Activated CD8-positive, alpha-beta T cell treated with anti-CD3 and anti-CD28 coated beads for 36 hours (primary cell): ENCODE measurements at regions of chr12 and their contacts with region 1.

Region 1: GRCh38 chr12:12916135-12916944 is 25.0 kb downstream of the GPRC5A start:
- DNase-seq: peak; percentile 92
- ATAC-seq: peak; percentile 98
- H3K4me3 Mint-ChIP-seq: no peak overlapping the region
- H3K27ac Mint-ChIP-seq: no peak overlapping the region
- H3K4me1 Mint-ChIP-seq: peaks cover 7% of the 10 kb centered on the region
- H3K27me3 Mint-ChIP-seq: peaks cover 12% of the 10 kb centered on the region
- CTCF ChIP-seq: peak; percentile 89

Region 2: GRCh38 chr12:12786716-12787601 is 129.4 kb before region 1 on chr12:
- CTCF ChIA-PET with region 1: interaction called, 26 read pairs
- POLR2A ChIA-PET with region 1: no interaction called
- intact Hi-C with region 1: no loop called
- DNase-seq: peak; percentile 67
- ATAC-seq: peak; percentile 88
- H3K4me3 Mint-ChIP-seq: peak overlapping the region; percentile 86
- H3K27ac Mint-ChIP-seq: peak overlapping the region; percentile 89
- H3K4me1 Mint-ChIP-seq: peaks cover 36% of the 10 kb centered on the region
- H3K27me3 Mint-ChIP-seq: no peaks in the 10 kb centered on the region
- CTCF ChIP-seq: no peak

Region 3: GRCh38 chr12:12954356-12954755 is 38.0 kb after region 1 on chr12:
- CTCF ChIA-PET with region 1: no interaction called
- POLR2A ChIA-PET with region 1: no interaction called
- intact Hi-C with region 1: no loop called
- DNase-seq: no peak
- ATAC-seq: no peak
- H3K4me3 Mint-ChIP-seq: no peak overlapping the region
- H3K27ac Mint-ChIP-seq: no peak overlapping the region
- H3K4me1 Mint-ChIP-seq: no peaks in the 10 kb centered on the region
- H3K27me3 Mint-ChIP-seq: peaks cover 5% of the 10 kb centered on the region
- CTCF ChIP-seq: no peak

Region 4: GRCh38 chr12:12983420-12984035 is 67.2 kb after region 1 on chr12:
- CTCF ChIA-PET with region 1: interaction called, 40 read pairs
- POLR2A ChIA-PET with region 1: no interaction called
- intact Hi-C with region 1: loop called (anchors 2 kb)
- DNase-seq: no peak
- ATAC-seq: no peak
- H3K4me3 Mint-ChIP-seq: no peak overlapping the region
- H3K27ac Mint-ChIP-seq: no peak overlapping the region
- H3K4me1 Mint-ChIP-seq: no peaks in the 10 kb centered on the region
- H3K27me3 Mint-ChIP-seq: no peaks in the 10 kb centered on the region
- CTCF ChIP-seq: peak; percentile 59

Region 5: DNA sequence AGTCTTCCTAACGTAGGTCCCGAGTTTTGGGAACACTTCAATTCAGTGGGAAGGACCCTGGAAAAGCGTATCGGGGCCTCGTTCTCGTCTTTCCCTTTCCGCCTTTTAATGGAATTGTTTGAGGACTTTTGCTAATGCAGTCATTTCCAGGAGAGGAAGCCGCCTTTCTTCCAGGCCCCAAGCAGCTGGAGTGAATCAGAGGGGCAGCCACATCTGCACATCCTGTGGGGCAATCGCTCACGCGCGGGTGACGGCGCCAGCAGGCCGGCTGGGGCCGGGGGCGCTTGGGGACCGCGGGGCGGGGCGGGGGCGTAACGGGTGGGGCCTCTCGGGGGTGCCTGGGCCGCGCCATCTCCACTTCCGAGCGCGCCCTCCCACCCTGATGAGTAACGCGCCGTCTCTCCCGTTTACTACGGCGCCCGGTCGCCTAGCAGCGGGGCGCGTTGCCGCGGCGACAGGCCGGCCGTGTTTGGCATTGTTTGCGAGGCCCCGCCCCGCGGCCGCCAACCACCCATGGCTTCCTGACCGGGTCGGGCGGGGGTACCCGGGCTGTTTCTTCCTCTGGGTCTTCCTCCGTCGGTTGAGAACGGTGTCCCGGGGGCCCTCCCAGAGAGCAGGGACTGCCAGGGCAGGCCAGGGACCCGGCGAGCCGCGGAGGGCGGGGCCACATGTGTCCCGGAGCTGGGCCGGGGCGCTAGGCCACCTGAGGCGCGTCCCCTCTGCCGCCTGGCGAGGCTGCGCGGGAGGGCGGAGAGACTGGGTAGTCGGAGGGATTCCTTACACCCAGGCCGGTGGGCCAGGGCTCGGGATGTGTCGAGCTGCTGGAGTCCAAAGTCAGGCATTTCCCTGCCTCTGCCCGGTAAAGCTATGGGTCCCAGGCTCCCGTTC is 184.8 kb after region 1 on chr12:
- CTCF ChIA-PET with region 1: interaction called, 10 read pairs
- POLR2A ChIA-PET with region 1: no interaction called
- intact Hi-C with region 1: loop called (anchors 5 kb)
- DNase-seq: peak; percentile 94
- ATAC-seq: peak; percentile 86
- H3K4me3 Mint-ChIP-seq: peak overlapping the region; percentile 60
- H3K27ac Mint-ChIP-seq: peak overlapping the region; percentile 76
- H3K4me1 Mint-ChIP-seq: peaks cover 47% of the 10 kb centered on the region
- H3K27me3 Mint-ChIP-seq: no peaks in the 10 kb centered on the region
- CTCF ChIP-seq: no peak

Region 6: GRCh38 chr12:13233830-13234641 is 317.7 kb after region 1 on chr12:
- CTCF ChIA-PET with region 1: interaction called, 4 read pairs
- POLR2A ChIA-PET with region 1: no interaction called
- intact Hi-C with region 1: loop called (anchors 2 kb)
- DNase-seq: peak; percentile 57
- ATAC-seq: peak; percentile 78
- H3K4me3 Mint-ChIP-seq: no peak overlapping the region
- H3K27ac Mint-ChIP-seq: no peak overlapping the region
- H3K4me1 Mint-ChIP-seq: no peaks in the 10 kb centered on the region
- H3K27me3 Mint-ChIP-seq: peaks cover 4% of the 10 kb centered on the region
- CTCF ChIP-seq: peak; percentile 71

Region 7: GRCh38 chr12:13376627-13377373 is 460.5 kb after region 1 on chr12:
- CTCF ChIA-PET with region 1: no interaction called
- POLR2A ChIA-PET with region 1: no interaction called
- intact Hi-C with region 1: no loop called
- DNase-seq: no peak
- ATAC-seq: no peak
- H3K4me3 Mint-ChIP-seq: no peak overlapping the region
- H3K27ac Mint-ChIP-seq: no peak overlapping the region
- H3K4me1 Mint-ChIP-seq: no peaks in the 10 kb centered on the region
- H3K27me3 Mint-ChIP-seq: peaks cover 5% of the 10 kb centered on the region
- CTCF ChIP-seq: no peak